ENCODE measurements at regions of chr3 and their contacts with region 1.

Region 1: GRCh38 chr3:72818092-72818773 is 30.0 kb downstream of the SHQ1 start:
- DNase-seq: no peak
- H3K4me3 ChIP-seq: no peak overlapping the region
- H3K27ac ChIP-seq: no peak overlapping the region
- H3K4me1 ChIP-seq: peaks cover 17 to 35% (median 25%) of the 10 kb centered on the region in 4 donors
- H3K27me3 ChIP-seq: no peaks in the 10 kb centered on the region
- CTCF ChIP-seq: peak; percentile 21 to 40 (median 32)
- EP300 ChIP-seq: no peak
- POLR2A ChIP-seq: no peak

Region 2: GRCh38 chr3:71725279-71725991 is 1092.8 kb before region 1 on chr3 and contains the start of gene EIF4E3:
- in situ Hi-C with region 1: loop called in 1 of 4 experiments (anchors 10 kb)
- intact Hi-C with region 1: loop called (anchors 10 kb)
- DNase-seq: peak; percentile 42
- H3K4me3 ChIP-seq: peak within 1 kb of the TSS; percentile 78 to 95 (median 90)
- H3K27ac ChIP-seq: peak within 1 kb of the TSS; percentile 80 to 90 (median 88)
- H3K4me1 ChIP-seq: peaks cover 11 to 44% (median 16%) of the 10 kb centered on the region in 4 donors
- H3K27me3 ChIP-seq: no peaks in the 10 kb centered on the region
- CTCF ChIP-seq: no peak
- EP300 ChIP-seq: no peak
- POLR2A ChIP-seq: no peak
- total RNA-seq, gene EIF4E3: 6.0 to 35.6 (median 19.4) TPM

Region 3: GRCh38 chr3:71734883-71735282 is 1083.3 kb before region 1 on chr3:
- in situ Hi-C with region 1: loop called in 1 of 4 experiments (anchors 10 kb)
- intact Hi-C with region 1: no loop called
- DNase-seq: no peak
- H3K4me3 ChIP-seq: no peak overlapping the region
- H3K27ac ChIP-seq: no peak overlapping the region
- H3K4me1 ChIP-seq: peaks cover 0 to 3% (median 0%) of the 10 kb centered on the region in 4 donors
- H3K27me3 ChIP-seq: peaks cover 11% of the 10 kb centered on the region
- CTCF ChIP-seq: no peak
- EP300 ChIP-seq: no peak
- POLR2A ChIP-seq: no peak

Region 4: DNA sequence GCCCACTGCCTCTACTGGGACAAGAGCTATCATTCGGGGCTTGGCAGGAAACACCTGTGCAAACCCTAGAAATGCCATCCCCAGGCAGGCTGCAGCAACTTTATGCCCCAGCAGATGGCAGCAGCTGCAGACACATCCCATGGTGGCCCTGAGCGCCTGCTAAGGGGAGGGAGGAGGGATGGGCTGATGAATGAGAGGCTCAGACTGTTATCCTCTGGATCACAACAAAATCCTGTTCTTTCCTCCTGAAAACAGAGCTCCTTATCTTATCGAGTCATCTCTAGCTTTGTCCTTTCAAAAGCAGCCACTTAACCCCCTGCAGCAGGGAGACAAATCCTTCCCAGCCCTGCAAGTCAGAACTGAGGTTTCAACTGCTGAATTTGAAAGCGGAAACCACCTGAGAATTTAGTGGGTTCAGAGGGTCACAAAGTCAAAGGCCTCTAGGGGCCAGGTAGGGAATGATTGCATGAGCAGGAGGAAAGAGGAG is 942.7 kb before region 1 on chr3:
- in situ Hi-C with region 1: loop called in 2 of 4 experiments (anchors 10 to 25 kb)
- intact Hi-C with region 1: loop called (anchors 5 kb)
- DNase-seq: peak; percentile 84
- H3K4me3 ChIP-seq: no peak overlapping the region
- H3K27ac ChIP-seq: no peak overlapping the region
- H3K4me1 ChIP-seq: peaks cover 0 to 19% (median 3%) of the 10 kb centered on the region in 4 donors
- H3K27me3 ChIP-seq: no peaks in the 10 kb centered on the region
- CTCF ChIP-seq: peak; percentile 72 to 87 (median 86)
- EP300 ChIP-seq: no peak
- POLR2A ChIP-seq: no peak

Region 5: GRCh38 chr3:71955240-71956068 is 862.8 kb before region 1 on chr3:
- in situ Hi-C with region 1: loop called in 3 of 4 experiments (anchors 10 to 25 kb)
- intact Hi-C with region 1: loop called (anchors 10 kb)
- DNase-seq: peak; percentile 71
- H3K4me3 ChIP-seq: no peak overlapping the region
- H3K27ac ChIP-seq: no peak overlapping the region
- H3K4me1 ChIP-seq: peaks cover 0 to 10% (median 4%) of the 10 kb centered on the region in 4 donors
- H3K27me3 ChIP-seq: no peaks in the 10 kb centered on the region
- CTCF ChIP-seq: peak; percentile 62 to 75 (median 66)
- EP300 ChIP-seq: no peak
- POLR2A ChIP-seq: no peak

Region 6: DNA sequence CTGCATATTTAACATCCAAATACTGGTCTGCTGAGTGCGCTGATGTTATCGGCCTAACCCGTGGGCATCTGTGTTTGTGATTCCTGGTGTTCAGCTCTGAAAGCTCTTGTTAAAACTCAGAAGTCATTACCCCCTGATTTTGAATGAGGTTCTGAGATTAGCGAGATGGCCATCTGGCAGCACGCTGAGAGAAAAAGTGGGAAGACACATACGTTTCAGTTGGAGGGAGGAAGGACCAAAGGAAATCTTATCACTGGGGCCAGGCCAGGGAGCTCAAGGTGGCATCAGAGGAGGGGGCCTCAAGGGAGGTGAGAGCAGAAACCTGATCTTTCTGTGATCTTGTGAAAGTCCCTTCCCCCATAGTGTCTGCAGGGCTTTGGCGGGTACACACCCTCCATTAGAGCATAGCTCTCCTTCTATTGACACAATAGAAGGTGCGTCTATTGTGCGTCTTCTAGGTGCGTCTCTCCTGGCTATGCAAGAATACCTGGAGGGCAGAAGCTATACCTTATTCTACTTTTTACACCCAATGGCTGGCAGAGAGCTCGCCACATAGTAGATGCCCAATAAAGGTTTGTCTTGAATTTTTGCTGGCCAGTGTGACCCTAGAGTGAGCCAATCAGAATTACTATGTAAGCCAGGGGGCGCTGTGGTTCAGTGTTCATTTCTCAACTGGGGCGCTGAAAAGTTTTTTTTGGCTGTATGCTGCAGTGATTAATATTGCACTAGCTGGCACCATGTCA is 152.4 kb before region 1 on chr3:
- in situ Hi-C with region 1: loop called in 2 of 4 experiments (anchors 5 to 10 kb)
- intact Hi-C with region 1: no loop called
- DNase-seq: peak; percentile 58
- H3K4me3 ChIP-seq: no peak overlapping the region
- H3K27ac ChIP-seq: no peak overlapping the region
- H3K4me1 ChIP-seq: no peaks in the 10 kb centered on the region
- H3K27me3 ChIP-seq: no peaks in the 10 kb centered on the region
- CTCF ChIP-seq: peak; percentile 46 to 74 (median 61)
- EP300 ChIP-seq: no peak
- POLR2A ChIP-seq: no peak